ENCODE measurements at regions of chr17 and their contacts with region 1.

Region 1: GRCh38 chr17:11705111-11705510 is 106.8 kb downstream of the DNAH9 start:
- DNase-seq: no peak
- ATAC-seq: no peak
- H3K4me3 ChIP-seq: no peak overlapping the region
- H3K27ac ChIP-seq: no peak overlapping the region
- H3K4me1 ChIP-seq: no peaks in the 10 kb centered on the region
- H3K27me3 ChIP-seq: no peaks in the 10 kb centered on the region
- CTCF ChIP-seq: no peak
- POLR2A ChIP-seq: no peak

Region 2: GRCh38 chr17:11557727-11558452 is 147.2 kb before region 1 on chr17:
- in situ Hi-C with region 1: no loop called
- intact Hi-C with region 1: no loop called
- DNase-seq: no peak
- ATAC-seq: no peak
- H3K4me3 ChIP-seq: no peak overlapping the region
- H3K27ac ChIP-seq: no peak overlapping the region
- H3K4me1 ChIP-seq: no peaks in the 10 kb centered on the region
- H3K27me3 ChIP-seq: no peaks in the 10 kb centered on the region
- CTCF ChIP-seq: no peak
- POLR2A ChIP-seq: no peak

Region 3: GRCh38 chr17:11589716-11590115 is 115.4 kb before region 1 on chr17:
- in situ Hi-C with region 1: no loop called
- intact Hi-C with region 1: no loop called
- DNase-seq: no peak
- ATAC-seq: no peak
- H3K4me3 ChIP-seq: no peak overlapping the region
- H3K27ac ChIP-seq: no peak overlapping the region
- H3K4me1 ChIP-seq: no peaks in the 10 kb centered on the region
- H3K27me3 ChIP-seq: peaks cover 0 to 3% (median 0%) of the 10 kb centered on the region in 3 donors
- CTCF ChIP-seq: no peak
- POLR2A ChIP-seq: no peak

Region 4: GRCh38 chr17:11823862-11824261 is 118.8 kb after region 1 on chr17:
- in situ Hi-C with region 1: loop called in 1 of 4 experiments (anchors 25 kb)
- intact Hi-C with region 1: no loop called
- DNase-seq: peak; percentile 17 to 33
- ATAC-seq: peak; percentile 72 to 83
- H3K4me3 ChIP-seq: no peak overlapping the region
- H3K27ac ChIP-seq: no peak overlapping the region
- H3K4me1 ChIP-seq: peaks cover 0 to 7% of the 10 kb centered on the region in 2 donors
- H3K27me3 ChIP-seq: no peaks in the 10 kb centered on the region
- CTCF ChIP-seq: no peak
- POLR2A ChIP-seq: no peak

Measured in gastrocnemius medialis (tissue), 4 donors.